Sciatic nerve (tissue), 2 donors: ENCODE measurements at regions of chr14 and their contacts with region 1.

Region 1: GRCh38 chr14:65213316-65213715 is 111.0 kb upstream of the MAX start:
- DNase-seq: no peak
- ATAC-seq: no peak

Region 2: GRCh38 chr14:63777024-63777423 is 1436.3 kb before region 1 on chr14:
- intact Hi-C with region 1: no loop called
- DNase-seq: no peak
- ATAC-seq: no peak

Region 3: DNA sequence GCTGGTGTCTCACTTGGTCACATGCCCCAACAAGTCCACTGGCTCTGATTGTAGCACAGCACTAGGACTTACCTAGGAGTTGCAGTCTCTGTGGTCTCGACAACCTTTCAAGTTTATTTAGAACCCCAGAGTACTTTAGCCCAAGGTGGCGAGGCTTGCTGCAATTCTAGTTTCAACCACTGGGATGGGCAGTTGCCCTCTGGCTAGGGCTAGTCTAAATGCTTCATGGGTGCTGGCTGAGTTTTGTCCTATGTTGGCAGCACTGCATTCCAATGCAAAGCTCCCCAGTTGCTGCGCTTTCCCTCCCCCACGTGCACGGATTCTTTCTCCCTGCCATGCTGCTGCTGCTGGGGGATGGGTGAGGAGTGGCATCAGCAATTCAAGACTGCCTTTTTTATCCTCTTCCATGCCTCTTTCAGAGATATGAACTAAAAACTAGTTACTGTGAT is 1152.6 kb before region 1 on chr14:
- intact Hi-C with region 1: no loop called
- DNase-seq: no peak
- ATAC-seq: no peak

Region 4: DNA sequence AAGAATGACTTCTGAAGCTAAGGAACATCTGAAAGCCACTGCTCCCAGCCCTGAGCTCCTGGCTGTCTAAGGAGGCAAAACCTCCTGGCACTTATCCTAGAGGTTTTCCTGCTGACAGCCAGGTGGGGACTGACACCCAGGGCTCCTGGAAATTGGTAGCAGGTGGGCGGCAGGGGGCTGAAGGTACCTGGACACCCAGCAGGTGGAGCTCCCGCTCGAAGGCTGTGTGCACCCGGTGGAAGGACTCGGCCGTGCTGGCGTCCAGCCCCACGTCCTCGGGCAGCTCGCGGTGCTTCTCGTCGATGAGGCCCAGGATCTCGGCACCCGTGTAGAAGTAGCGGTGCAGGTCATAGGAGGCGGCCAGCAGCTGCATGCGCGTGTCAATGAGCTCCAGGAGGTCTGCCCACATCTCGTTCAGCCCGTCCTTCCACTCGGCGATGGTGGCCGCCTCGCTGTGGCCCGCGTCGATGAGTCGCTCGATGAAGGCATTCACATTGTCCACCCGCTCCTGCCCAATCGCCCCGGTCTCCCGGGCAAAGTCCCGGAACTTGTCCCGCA is 440.8 kb before region 1 on chr14:
- intact Hi-C with region 1: no loop called
- DNase-seq: no peak
- ATAC-seq: no peak

Region 5: GRCh38 chr14:65095619-65096205 is 117.6 kb before region 1 on chr14:
- intact Hi-C with region 1: loop called (anchors 2 kb)
- DNase-seq: peak; percentile 73
- ATAC-seq: peak; percentile 92